ENCODE measurements at regions of chr13 and their contacts with region 1.

Region 1: GRCh38 chr13:44470638-44471562 is 97.3 kb downstream of the SERP2 start:
- DNase-seq: peak in 2 of 5 donors; percentile 16 to 20
- H3K4me3 ChIP-seq: no peak overlapping the region
- H3K4me3 Mint-ChIP-seq: no peak overlapping the region
- H3K27ac ChIP-seq: no peak overlapping the region
- H3K27ac Mint-ChIP-seq: no peak overlapping the region
- H3K4me1 ChIP-seq: no peaks in the 10 kb centered on the region
- H3K4me1 Mint-ChIP-seq: peaks cover 0 to 4% (median 0%) of the 10 kb centered on the region in 4 donors
- H3K27me3 ChIP-seq: no peaks in the 10 kb centered on the region
- H3K27me3 Mint-ChIP-seq: no peaks in the 10 kb centered on the region

Region 2: GRCh38 chr13:44050450-44051063 is 420.3 kb before region 1 on chr13:
- CTCF ChIA-PET with region 1: interaction called, 3 read pairs
- POLR2A ChIA-PET with region 1: no interaction called
- intact Hi-C with region 1: loop called (anchors 1 kb)
- DNase-seq: peak in 4 of 5 donors; percentile 21 to 36 (median 32)
- H3K4me3 ChIP-seq: no peak overlapping the region
- H3K4me3 Mint-ChIP-seq: no peak overlapping the region
- H3K27ac ChIP-seq: no peak overlapping the region
- H3K27ac Mint-ChIP-seq: no peak overlapping the region
- H3K4me1 ChIP-seq: no peaks in the 10 kb centered on the region
- H3K4me1 Mint-ChIP-seq: peaks cover 0 to 4% (median 3%) of the 10 kb centered on the region in 4 donors
- H3K27me3 ChIP-seq: peaks cover 5% of the 10 kb centered on the region
- H3K27me3 Mint-ChIP-seq: peaks cover 20 to 36% of the 10 kb centered on the region in 2 donors

Region 3: GRCh38 chr13:44455769-44456168 is 15.1 kb before region 1 on chr13:
- CTCF ChIA-PET with region 1: interaction called, 10 read pairs
- POLR2A ChIA-PET with region 1: no interaction called
- intact Hi-C with region 1: no loop called
- DNase-seq: no peak
- H3K4me3 ChIP-seq: no peak overlapping the region
- H3K4me3 Mint-ChIP-seq: no peak overlapping the region
- H3K27ac ChIP-seq: no peak overlapping the region
- H3K27ac Mint-ChIP-seq: no peak overlapping the region
- H3K4me1 ChIP-seq: no peaks in the 10 kb centered on the region
- H3K4me1 Mint-ChIP-seq: peaks cover 5 to 19% (median 10%) of the 10 kb centered on the region in 4 donors
- H3K27me3 ChIP-seq: no peaks in the 10 kb centered on the region
- H3K27me3 Mint-ChIP-seq: no peaks in the 10 kb centered on the region

Region 4: GRCh38 chr13:44908712-44909111 is 437.8 kb after region 1 on chr13:
- CTCF ChIA-PET with region 1: no interaction called
- POLR2A ChIA-PET with region 1: no interaction called
- intact Hi-C with region 1: no loop called
- DNase-seq: no peak
- H3K4me3 ChIP-seq: no peak overlapping the region
- H3K4me3 Mint-ChIP-seq: no peak overlapping the region
- H3K27ac ChIP-seq: no peak overlapping the region
- H3K27ac Mint-ChIP-seq: no peak overlapping the region
- H3K4me1 ChIP-seq: no peaks in the 10 kb centered on the region
- H3K4me1 Mint-ChIP-seq: peaks cover 0 to 2% (median 0%) of the 10 kb centered on the region in 4 donors
- H3K27me3 ChIP-seq: no peaks in the 10 kb centered on the region
- H3K27me3 Mint-ChIP-seq: peaks cover 3 to 5% of the 10 kb centered on the region in 2 donors

Measured in CD4-positive, alpha-beta memory T cell (primary cell).